Endothelial cell of umbilical vein (primary cell): ENCODE measurements at regions of chr13 and their contacts with region 1.

Region 1: DNA sequence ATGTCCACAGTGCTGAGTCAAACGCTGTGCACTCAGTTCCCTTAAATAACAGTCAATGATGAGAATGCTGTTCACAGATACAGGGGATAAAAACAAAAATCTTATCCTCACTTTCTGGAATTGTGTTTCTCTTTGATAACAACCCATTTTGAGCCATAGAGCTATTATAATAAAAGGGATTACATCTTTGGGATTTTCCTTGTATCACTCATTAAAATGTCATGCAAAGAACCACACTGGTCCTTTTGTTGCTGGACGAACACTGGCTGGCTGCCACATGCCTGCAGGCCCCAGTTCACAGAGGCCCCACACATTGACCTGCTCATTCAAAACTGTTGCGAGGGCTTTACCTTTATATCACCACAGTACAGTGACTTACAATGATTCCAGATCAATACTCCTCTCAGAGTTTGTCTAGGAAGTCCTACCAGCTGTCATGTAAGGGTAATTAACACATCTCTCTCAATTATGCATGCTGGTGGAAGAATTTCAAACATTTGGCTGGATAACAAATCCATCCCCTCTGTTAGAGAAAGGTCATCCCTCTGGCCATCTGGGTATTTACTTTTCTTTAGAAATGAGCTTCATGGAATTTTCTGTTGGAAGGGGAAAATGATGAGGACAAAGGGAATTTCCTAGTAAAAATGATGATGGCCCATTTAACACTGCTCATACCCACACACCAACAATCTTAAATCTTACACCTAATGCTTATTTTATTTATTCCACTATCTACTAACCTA is 85.9 kb downstream of the MBNL2 start:
- DNase-seq: peak; percentile 87
- H3K4me3 ChIP-seq: no peak overlapping the region
- H3K27ac ChIP-seq: peak overlapping the region; percentile 83
- H3K4me1 ChIP-seq: peaks cover 38% of the 10 kb centered on the region
- H3K27me3 ChIP-seq: no peaks in the 10 kb centered on the region
- CTCF ChIP-seq: no peak
- POLR2A ChIP-seq: no peak

Region 2: GRCh38 chr13:97328222-97328790 is 20.3 kb after region 1 on chr13:
- CTCF ChIA-PET with region 1: interaction called, 10 read pairs
- POLR2A ChIA-PET with region 1: no interaction called
- dilution Hi-C with region 1: no loop called
- intact Hi-C with region 1: loop called (anchors 1 kb)
- DNase-seq: peak; percentile 71
- H3K4me3 ChIP-seq: no peak overlapping the region
- H3K27ac ChIP-seq: peak overlapping the region; percentile 71
- H3K4me1 ChIP-seq: peaks cover 24% of the 10 kb centered on the region
- H3K27me3 ChIP-seq: no peaks in the 10 kb centered on the region
- CTCF ChIP-seq: no peak
- POLR2A ChIP-seq: no peak